Activated CD4-positive, alpha-beta T cell treated with anti-CD3 and anti-CD28 coated beads, Interleukin-2, amount 10 ng/mL, durations not matched to agents 7 days and 5 days (primary cell): ENCODE measurements at regions of chr17 and their contacts with region 1.

Region 1: DNA sequence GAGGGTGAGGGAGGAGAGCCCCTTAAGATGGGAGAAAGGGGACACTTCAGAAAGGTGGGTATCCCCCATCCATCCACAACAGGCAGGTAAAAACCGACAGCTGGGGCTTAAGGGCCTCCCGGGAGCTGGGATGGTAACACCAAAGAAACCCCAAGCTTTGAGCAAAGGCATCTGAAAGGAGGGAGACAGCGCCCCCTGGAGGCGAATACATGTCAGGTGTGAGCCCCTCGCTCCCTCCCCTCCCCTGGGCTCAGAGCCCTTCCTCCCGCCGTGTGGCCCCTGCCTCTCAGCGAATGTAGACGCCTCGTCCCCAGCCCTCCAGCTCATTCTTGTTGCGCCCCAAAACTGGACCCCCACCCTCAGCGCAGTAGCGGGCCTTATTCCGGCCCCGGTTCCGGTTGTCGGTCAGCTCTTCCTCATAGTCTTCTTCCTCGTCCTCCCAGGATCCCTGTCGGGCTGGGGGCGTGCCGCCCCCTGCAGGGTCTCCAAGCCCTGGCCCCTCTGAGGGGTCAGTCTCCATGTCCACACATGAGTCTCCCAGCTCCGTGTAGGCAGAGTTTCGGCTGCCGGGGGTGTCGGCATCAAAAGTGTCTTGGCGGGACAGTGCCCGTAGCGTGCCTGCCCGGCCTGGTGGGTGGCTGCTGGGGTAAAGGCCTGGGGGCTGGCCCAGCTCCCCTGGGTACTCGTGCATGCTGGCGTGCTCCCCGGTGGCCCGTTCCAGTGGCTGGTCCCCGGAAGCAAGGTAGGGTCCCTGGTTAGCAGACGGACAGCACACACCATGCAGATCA is 9.1 kb upstream of the ARL5C start:
- DNase-seq: peak; percentile 83
- H3K4me3 Mint-ChIP-seq: no peak overlapping the region
- H3K27ac Mint-ChIP-seq: no peak overlapping the region
- H3K4me1 Mint-ChIP-seq: peaks cover 22% of the 10 kb centered on the region
- H3K27me3 Mint-ChIP-seq: peaks cover 5% of the 10 kb centered on the region

Region 2: GRCh38 chr17:39164675-39165143 is 10.4 kb before region 1 on chr17:
- CTCF ChIA-PET with region 1: interaction called, 70 read pairs
- POLR2A ChIA-PET with region 1: no interaction called
- DNase-seq: peak; percentile 81
- H3K4me3 Mint-ChIP-seq: peak overlapping the region; percentile 81
- H3K27ac Mint-ChIP-seq: no peak overlapping the region
- H3K4me1 Mint-ChIP-seq: peaks cover 38% of the 10 kb centered on the region
- H3K27me3 Mint-ChIP-seq: peaks cover 29% of the 10 kb centered on the region

Region 3: DNA sequence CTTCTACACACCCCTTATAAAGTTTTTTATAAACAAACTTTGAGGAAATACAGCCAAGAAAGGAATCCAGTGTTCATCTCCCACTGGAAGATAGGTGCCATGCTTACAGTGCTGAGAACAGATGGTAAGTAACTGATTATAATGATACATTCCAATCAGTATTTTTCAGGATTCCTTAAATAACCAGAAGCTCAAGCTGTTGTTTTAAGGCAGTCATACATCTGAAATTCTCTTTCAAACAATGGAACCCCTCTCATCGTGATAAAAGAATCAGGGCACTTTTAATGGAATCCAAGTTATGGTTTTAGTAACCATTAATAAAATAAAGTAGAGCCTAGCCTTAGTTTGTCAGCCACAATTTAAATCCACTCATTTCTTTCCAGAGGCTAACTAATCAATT is 106.7 kb after region 1 on chr17:
- CTCF ChIA-PET with region 1: no interaction called
- POLR2A ChIA-PET with region 1: no interaction called
- DNase-seq: no peak
- H3K4me3 Mint-ChIP-seq: no peak overlapping the region
- H3K27ac Mint-ChIP-seq: no peak overlapping the region
- H3K4me1 Mint-ChIP-seq: no peaks in the 10 kb centered on the region
- H3K27me3 Mint-ChIP-seq: no peaks in the 10 kb centered on the region